Esophagus squamous epithelium (tissue), 5 donors: ENCODE measurements at regions of chr15 and their contacts with region 1.

Region 1: DNA sequence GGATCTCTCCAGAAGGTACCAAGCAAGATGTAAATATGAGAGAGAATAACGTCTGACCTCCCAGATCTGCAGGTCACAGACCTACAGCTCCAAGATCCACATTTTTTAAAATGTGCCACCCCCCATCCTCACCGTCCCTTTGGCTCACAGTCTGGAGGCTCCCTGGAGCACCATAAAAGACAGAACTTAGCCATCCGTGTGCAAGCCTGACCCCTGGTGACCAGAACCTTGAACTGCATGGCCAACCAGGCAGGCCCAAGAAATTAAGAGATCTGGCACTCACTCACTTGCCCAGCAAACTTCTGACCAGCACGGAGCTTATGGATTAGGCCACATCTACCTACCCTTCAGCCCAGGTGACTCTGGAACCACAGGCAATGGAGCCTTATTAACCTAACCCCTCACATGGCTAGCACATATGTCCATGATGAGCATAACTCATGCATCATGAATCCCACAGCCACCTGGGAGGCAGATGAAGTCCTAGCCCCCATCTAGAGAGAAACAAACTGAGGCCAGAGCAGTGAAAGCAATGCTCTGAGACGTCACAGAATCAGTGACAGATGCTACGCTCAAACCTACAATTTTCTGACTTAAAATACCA is 275.3 kb downstream of the UACA start:
- DNase-seq: no peak
- H3K4me3 ChIP-seq: no peak overlapping the region
- H3K27ac ChIP-seq: no peak overlapping the region
- H3K4me1 ChIP-seq: peaks cover 7 to 28% (median 18%) of the 10 kb centered on the region in 3 donors
- H3K27me3 ChIP-seq: peaks cover 0 to 48% (median 0%) of the 10 kb centered on the region in 4 donors
- CTCF ChIP-seq: peak; percentile 93 to 98 (median 97)
- POLR2A ChIP-seq: no peak

Region 2: DNA sequence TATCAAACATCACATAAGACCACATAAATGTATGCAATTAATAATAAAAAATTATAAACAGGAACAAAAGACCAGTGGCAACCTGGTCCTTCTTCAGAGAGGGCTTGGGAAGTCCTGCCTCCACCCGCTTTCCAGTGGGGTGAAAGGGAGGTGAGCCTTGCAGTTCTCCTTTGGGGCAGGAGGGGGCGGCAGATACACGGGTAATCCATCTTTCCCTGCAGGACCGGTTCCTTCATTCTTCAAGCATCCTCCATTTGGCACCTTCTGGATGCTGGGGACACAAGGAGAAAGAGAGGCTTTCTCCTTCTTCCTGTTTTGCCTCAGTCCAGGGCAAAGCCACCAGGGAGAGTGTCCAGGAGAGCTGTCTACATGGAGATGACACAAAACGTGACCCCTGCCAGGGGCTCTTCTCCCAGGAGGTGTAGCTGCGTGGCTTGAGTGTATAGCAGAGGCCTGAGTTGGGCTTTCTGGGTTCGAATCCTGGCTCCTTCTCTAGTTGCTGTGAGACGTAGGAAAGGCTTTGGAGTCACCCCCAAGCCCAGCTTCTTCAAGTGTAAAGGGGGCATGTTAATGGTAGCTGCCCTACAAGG is 1012.2 kb before region 1 on chr15:
- intact Hi-C with region 1: loop called (anchors 10 kb)
- DNase-seq: no peak
- H3K4me3 ChIP-seq: no peak overlapping the region
- H3K27ac ChIP-seq: no peak overlapping the region
- H3K4me1 ChIP-seq: peaks cover 0 to under 1% (median 0%) of the 10 kb centered on the region in 3 donors
- H3K27me3 ChIP-seq: peaks cover 0 to 52% (median 0%) of the 10 kb centered on the region in 4 donors
- CTCF ChIP-seq: peak; percentile 89 to 97 (median 95)
- POLR2A ChIP-seq: no peak

Region 3: DNA sequence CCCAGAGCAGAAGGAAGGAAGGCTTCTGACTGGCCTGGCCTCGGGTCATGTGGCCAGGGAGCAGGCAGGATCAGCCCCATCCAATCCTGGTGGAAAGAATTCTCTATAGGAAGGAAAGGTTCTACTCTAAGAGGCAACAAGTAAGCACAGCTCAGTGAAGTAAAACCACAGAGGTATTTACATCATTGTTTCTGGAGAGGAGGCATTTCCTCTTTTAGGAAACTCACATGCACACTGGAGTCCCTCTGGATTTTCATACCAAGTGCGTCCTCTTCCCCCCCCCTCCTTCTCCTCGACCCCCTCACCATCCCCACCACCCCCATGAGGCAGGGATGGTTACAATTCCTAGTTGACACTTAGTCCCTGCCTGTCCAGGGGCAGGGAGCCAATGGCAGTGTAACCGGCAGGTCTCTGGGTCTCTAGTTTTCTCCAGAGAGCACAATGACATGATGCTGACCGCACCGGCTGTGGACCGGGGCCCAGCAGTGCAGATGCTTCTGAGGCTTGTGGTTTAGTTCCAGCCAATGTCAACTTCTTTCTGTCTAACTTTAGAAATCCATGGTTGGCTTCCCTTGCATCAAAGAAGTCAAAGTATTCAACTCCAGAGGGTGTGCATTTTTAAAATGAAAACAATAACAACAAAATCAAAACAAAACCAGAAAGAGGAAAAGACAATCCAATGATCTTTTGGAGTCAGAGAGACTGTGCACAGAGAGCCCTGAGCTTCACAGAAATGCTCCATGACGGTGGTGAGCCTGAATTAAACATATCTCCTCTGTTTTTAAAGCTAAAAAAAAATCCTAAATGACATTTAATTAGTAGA is 160.0 kb before region 1 on chr15:
- intact Hi-C with region 1: no loop called
- DNase-seq: no peak
- H3K4me3 ChIP-seq: no peak overlapping the region
- H3K27ac ChIP-seq: peak overlapping the region in 1 of 4 donors; percentile 54
- H3K4me1 ChIP-seq: peaks cover 4 to 36% (median 15%) of the 10 kb centered on the region in 3 donors
- H3K27me3 ChIP-seq: peaks cover 0 to 39% (median 0%) of the 10 kb centered on the region in 4 donors
- CTCF ChIP-seq: no peak
- POLR2A ChIP-seq: no peak